ENCODE measurements at regions of chr15 and their contacts with region 1.

Region 1: DNA sequence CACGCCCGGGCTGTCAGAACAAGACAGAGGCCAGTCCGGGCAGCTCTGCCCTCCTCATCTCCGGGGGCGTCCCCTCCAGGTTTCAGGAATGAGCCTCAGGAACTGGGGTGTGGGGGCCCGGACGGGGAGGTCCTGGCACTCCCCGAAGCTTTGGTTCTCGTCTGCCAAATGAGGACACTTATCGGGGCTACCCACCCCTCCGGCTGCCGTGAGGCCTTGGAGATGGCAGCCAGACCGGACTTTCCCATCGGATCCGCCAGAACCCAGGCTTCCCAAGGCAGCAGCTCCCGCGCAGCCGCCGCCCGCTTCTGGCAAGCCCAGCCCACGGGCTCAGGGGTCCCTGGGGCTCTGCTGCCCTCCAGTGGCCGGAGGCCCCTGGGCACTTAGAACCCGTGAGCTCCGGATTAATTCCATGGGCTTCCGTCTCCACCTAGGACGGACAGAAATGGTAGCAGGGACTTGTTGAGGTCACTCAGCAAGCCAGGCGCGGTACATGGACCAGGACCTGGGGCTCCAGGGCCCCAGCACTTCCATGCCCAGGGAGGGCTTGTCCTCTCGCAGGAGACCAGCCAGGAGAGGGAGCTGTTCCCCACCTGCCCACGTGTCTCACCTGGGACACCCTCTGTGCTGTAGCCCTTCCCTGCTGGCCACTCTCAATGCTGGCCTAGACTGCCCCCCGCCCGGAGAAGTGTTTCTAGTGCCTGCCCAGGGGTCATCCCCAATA is 89.4 kb downstream of the LINGO1 start:
- DNase-seq: peak; percentile 84
- ATAC-seq: peak; percentile 94
- H3K4me3 Mint-ChIP-seq: peak overlapping the region; percentile 74
- H3K27ac Mint-ChIP-seq: peak overlapping the region; percentile 69
- H3K4me1 Mint-ChIP-seq: peaks cover 7% of the 10 kb centered on the region
- H3K27me3 Mint-ChIP-seq: peaks cover 3% of the 10 kb centered on the region
- CTCF ChIP-seq: peak; percentile 98

Region 2: DNA sequence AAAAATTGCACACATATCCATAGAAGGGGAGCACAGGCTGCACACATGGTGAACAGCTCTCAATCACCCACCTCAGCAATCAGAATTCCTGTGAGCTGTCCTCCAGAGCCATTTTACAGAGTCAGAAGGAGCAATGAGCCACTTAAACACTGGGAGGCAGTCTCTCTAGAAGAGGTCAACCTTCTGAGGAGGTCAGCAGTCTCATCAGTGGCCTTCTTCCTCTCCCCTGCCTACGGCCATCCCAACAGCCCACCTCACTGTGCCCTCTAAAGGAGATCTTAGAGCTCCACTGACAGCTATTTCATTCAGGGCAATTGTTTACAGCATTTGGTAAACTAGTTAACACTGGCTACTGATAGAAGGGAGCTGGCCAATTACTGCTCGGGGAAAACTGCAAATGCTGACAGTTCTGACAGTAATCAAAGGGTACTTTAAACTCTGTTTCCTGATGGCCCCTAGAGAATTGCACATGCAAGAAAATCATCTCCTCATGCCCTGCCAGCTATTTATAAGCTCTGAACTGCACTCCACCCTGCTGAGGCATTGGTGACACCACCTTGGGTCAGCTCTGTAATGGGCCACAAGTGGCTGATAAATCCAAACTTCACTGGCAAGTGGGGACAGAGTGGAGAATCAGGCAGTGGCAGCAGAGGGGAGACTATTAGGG is 430.4 kb before region 1 on chr15:
- CTCF ChIA-PET with region 1: interaction called, 78 read pairs
- POLR2A ChIA-PET with region 1: no interaction called
- intact Hi-C with region 1: loop called (anchors 5 kb)
- DNase-seq: no peak
- ATAC-seq: no peak
- H3K4me3 Mint-ChIP-seq: no peak overlapping the region
- H3K27ac Mint-ChIP-seq: no peak overlapping the region
- H3K4me1 Mint-ChIP-seq: no peaks in the 10 kb centered on the region
- H3K27me3 Mint-ChIP-seq: no peaks in the 10 kb centered on the region
- CTCF ChIP-seq: no peak

Region 3: GRCh38 chr15:77160562-77161478 is 382.5 kb before region 1 on chr15:
- CTCF ChIA-PET with region 1: interaction called, 11 read pairs
- POLR2A ChIA-PET with region 1: no interaction called
- intact Hi-C with region 1: no loop called
- DNase-seq: no peak
- ATAC-seq: peak; percentile 39
- H3K4me3 Mint-ChIP-seq: peak overlapping the region; percentile 39
- H3K27ac Mint-ChIP-seq: peak overlapping the region; percentile 77
- H3K4me1 Mint-ChIP-seq: peaks cover 45% of the 10 kb centered on the region
- H3K27me3 Mint-ChIP-seq: no peaks in the 10 kb centered on the region
- CTCF ChIP-seq: no peak

Region 4: GRCh38 chr15:77387365-77388105 is 155.8 kb before region 1 on chr15:
- CTCF ChIA-PET with region 1: no interaction called
- POLR2A ChIA-PET with region 1: no interaction called
- intact Hi-C with region 1: no loop called
- DNase-seq: no peak
- ATAC-seq: no peak
- H3K4me3 Mint-ChIP-seq: no peak overlapping the region
- H3K27ac Mint-ChIP-seq: no peak overlapping the region
- H3K4me1 Mint-ChIP-seq: peaks cover 23% of the 10 kb centered on the region
- H3K27me3 Mint-ChIP-seq: no peaks in the 10 kb centered on the region
- CTCF ChIP-seq: no peak

Region 5: GRCh38 chr15:77475898-77476297 is 67.4 kb before region 1 on chr15:
- CTCF ChIA-PET with region 1: interaction called, 12 read pairs
- POLR2A ChIA-PET with region 1: no interaction called
- intact Hi-C with region 1: no loop called
- DNase-seq: no peak
- ATAC-seq: no peak
- H3K4me3 Mint-ChIP-seq: no peak overlapping the region
- H3K27ac Mint-ChIP-seq: no peak overlapping the region
- H3K4me1 Mint-ChIP-seq: peaks cover 3% of the 10 kb centered on the region
- H3K27me3 Mint-ChIP-seq: no peaks in the 10 kb centered on the region
- CTCF ChIP-seq: no peak

Region 6: GRCh38 chr15:77507911-77508310 is 35.4 kb before region 1 on chr15:
- CTCF ChIA-PET with region 1: interaction called, 10 read pairs
- POLR2A ChIA-PET with region 1: interaction called, 3 read pairs
- intact Hi-C with region 1: no loop called
- DNase-seq: no peak
- ATAC-seq: no peak
- H3K4me3 Mint-ChIP-seq: no peak overlapping the region
- H3K27ac Mint-ChIP-seq: no peak overlapping the region
- H3K4me1 Mint-ChIP-seq: peaks cover 10% of the 10 kb centered on the region
- H3K27me3 Mint-ChIP-seq: no peaks in the 10 kb centered on the region
- CTCF ChIP-seq: no peak

Measured in activated CD8-positive, alpha-beta T cell treated with anti-CD3 and anti-CD28 coated beads for 36 hours (primary cell).